ENCODE measurements at regions of chr4 and their contacts with region 1.

Region 1: DNA sequence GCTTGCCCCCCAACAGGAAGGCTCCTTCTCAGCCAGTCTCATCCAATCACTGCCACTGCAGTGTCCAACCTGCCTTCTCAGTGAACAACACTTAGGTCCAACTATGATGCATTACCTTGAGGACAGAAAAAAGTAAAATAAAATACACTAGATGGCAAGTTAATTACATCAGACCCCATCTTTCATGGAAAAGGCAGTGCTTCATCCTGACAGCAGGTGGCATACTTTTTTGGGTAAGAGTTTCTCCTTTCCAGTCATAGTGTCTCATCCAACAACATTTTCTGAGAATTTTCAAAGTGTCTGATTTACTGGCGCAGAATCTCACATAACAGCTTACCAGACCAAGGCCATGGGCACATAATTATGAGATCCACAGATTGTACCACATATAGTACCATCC is 1742.8 kb downstream of the PCDH7 start:
- DNase-seq: no peak
- ATAC-seq: peak; percentile 69
- H3K4me3 ChIP-seq: no peak overlapping the region
- H3K27ac ChIP-seq: no peak overlapping the region
- H3K4me1 ChIP-seq: no peaks in the 10 kb centered on the region
- H3K27me3 ChIP-seq: no peaks in the 10 kb centered on the region
- CTCF ChIP-seq: peak; percentile 31 to 60 (median 57); a peak in 5 of 6 replicates
- EP300 ChIP-seq: no peak
- POLR2A ChIP-seq: no peak
- RAD21 ChIP-seq: 0 out of 2 replicates have a peak, but pooled peaks have one; percentile 23

Region 2: GRCh38 chr4:32775032-32775431 is 312.1 kb after region 1 on chr4:
- CTCF ChIA-PET with region 1: interaction called, 12 read pairs
- POLR2A ChIA-PET with region 1: no interaction called
- RAD21 ChIA-PET with region 1: interaction called, 6 read pairs
- SMC1A ChIA-PET with region 1: interaction called, 14 read pairs
- in situ Hi-C with region 1: no loop called
- intact Hi-C with region 1: loop called (anchors 1 kb)
- DNase-seq: no peak
- ATAC-seq: peak; percentile 90
- H3K4me3 ChIP-seq: no peak overlapping the region
- H3K27ac ChIP-seq: no peak overlapping the region
- H3K4me1 ChIP-seq: no peaks in the 10 kb centered on the region
- H3K27me3 ChIP-seq: no peaks in the 10 kb centered on the region
- CTCF ChIP-seq: peak in 2 of 3 experiments; percentile 42 to 63; a peak in 3 of 6 replicates
- EP300 ChIP-seq: no peak
- POLR2A ChIP-seq: no peak
- RAD21 ChIP-seq: peak; percentile 36; the same call in 1 of the 2 replicates

Region 3: GRCh38 chr4:32847461-32847860 is 384.5 kb after region 1 on chr4:
- CTCF ChIA-PET with region 1: no interaction called
- POLR2A ChIA-PET with region 1: no interaction called
- RAD21 ChIA-PET with region 1: no interaction called
- SMC1A ChIA-PET with region 1: no interaction called
- in situ Hi-C with region 1: no loop called
- intact Hi-C with region 1: loop called (anchors 10 kb)
- DNase-seq: no peak
- ATAC-seq: no peak
- H3K4me3 ChIP-seq: no peak overlapping the region
- H3K27ac ChIP-seq: no peak overlapping the region
- H3K4me1 ChIP-seq: no peaks in the 10 kb centered on the region
- H3K27me3 ChIP-seq: no peaks in the 10 kb centered on the region
- CTCF ChIP-seq: no peak
- EP300 ChIP-seq: no peak
- POLR2A ChIP-seq: no peak
- RAD21 ChIP-seq: no peak

Measured in GM12878 (cell line).